Dendritic cell treated with granulocyte-macrophage colony-stimulating factor and Interleukin-4, amounts not matched to agents 40 ng/mL and 50 ng/mL, for 4 days (primary cell): ENCODE measurements at regions of chr1 and their contacts with region 1.

Region 1: GRCh38 chr1:44775078-44775929 is at the start of gene RPS8:
- H3K4me3 Mint-ChIP-seq: peak within 1 kb of the TSS; percentile 89
- H3K27ac Mint-ChIP-seq: peak within 1 kb of the TSS; percentile 97
- H3K4me1 Mint-ChIP-seq: peaks cover 36% of the 10 kb centered on the region
- H3K27me3 Mint-ChIP-seq: no peaks in the 10 kb centered on the region

Region 2: DNA sequence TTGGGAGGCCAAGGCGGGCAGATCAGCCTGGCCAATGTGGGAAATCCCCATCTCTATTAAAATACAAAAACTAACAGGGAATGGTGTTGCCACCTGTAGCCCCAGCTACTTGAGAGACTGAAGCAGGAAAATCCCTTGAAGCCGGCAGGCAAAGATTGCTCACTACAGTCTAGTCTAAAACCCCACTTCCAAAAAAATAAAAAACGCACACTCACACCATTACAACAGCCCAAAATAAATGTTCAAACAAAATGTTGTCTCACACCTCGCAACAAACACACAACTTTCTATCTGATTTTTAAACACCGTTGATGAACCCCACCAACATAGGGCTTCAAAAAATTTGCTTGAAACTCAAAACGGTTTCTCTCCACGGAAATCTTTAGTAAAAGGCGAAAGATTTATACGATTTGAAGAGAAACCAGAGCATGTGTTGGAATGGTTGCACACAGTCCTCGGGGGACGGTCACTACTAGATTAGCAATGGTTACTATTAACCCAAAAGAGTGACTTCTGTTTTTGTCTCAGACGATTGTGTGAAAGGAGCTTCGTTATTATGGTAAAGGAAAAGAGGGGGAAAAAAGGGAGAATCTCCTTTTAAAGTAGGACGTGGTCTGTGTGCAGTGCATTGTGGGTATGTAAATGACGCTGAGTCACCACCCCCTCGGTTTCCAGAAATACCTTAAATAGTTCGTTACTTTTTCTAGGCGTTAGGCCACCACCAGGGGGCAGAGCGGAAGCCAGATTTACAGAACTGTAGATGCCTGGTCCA is 44.4 kb before region 1 on chr1 and contains the start of gene RNU5D-1:
- intact Hi-C with region 1: loop called (anchors 2 kb)
- H3K4me3 Mint-ChIP-seq: peak within 1 kb of the TSS; percentile 65
- H3K27ac Mint-ChIP-seq: peak within 1 kb of the TSS; percentile 96
- H3K4me1 Mint-ChIP-seq: peaks cover 40% of the 10 kb centered on the region
- H3K27me3 Mint-ChIP-seq: no peaks in the 10 kb centered on the region

Region 3: GRCh38 chr1:44739361-44740178 is 35.7 kb before region 1 on chr1 and contains the start of gene KIF2C:
- intact Hi-C with region 1: loop called (anchors 2 kb)
- H3K4me3 Mint-ChIP-seq: peak within 1 kb of the TSS; percentile 83
- H3K27ac Mint-ChIP-seq: peak within 1 kb of the TSS; percentile 93
- H3K4me1 Mint-ChIP-seq: peaks cover 20% of the 10 kb centered on the region
- H3K27me3 Mint-ChIP-seq: no peaks in the 10 kb centered on the region

Region 4: DNA sequence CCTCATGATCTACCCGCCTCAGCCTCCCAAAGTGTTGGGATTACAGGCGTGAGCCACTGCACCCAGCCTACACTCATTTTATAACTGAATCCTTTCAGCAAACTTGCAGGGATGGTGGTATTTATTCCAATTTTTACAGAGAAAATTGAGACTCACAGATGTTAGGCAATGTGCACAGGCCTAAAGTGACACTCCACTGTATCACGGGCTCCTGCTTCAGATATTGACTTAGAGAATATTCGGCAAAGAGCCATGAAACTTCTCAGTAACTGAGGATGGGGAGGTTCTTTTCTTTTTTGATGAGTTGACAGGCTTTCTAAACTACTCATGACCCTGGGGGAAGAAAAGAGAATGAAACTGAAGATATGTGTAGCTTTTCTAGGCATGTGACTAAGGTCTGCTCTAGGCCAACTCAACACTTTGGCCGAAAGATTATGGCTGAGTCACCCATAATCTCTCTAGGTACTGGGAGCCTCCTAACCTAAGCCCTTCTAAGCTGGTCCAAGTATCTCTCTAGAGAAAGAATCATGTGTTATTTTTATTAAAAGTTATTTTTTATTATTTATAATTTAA is 87.6 kb after region 1 on chr1:
- intact Hi-C with region 1: no loop called
- H3K4me3 Mint-ChIP-seq: no peak overlapping the region
- H3K27ac Mint-ChIP-seq: no peak overlapping the region
- H3K4me1 Mint-ChIP-seq: peaks cover 22% of the 10 kb centered on the region
- H3K27me3 Mint-ChIP-seq: no peaks in the 10 kb centered on the region